Caco-2 (cell line): ENCODE measurements at regions of chr17 and their contacts with region 1.

Region 1: DNA sequence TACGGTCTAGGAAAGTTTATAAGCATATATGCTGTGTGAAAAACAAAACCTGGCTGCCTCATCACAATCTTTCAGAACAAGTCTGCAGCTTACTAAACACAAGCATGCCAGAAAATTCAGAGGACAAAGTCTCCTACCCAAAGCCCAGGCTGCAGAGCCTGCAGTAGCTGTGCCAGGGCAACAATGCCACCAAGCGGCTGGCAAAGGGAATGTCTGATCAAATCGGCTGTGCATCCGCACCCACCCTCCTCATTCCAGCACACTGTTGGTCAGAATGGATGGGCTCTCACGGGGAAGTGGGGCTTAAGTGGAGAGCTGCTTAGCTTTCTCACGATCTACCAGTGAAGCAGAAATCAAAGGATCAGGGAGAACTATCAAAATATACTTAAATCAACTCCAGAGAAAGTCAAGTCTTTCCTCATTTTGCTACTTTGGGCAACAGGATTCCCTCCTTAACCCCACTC is 73.5 kb downstream of the CYTH1 start:
- DNase-seq: peak; percentile 73 to 79
- H3K4me3 ChIP-seq: no peak overlapping the region
- H3K4me3 Mint-ChIP-seq: no peak overlapping the region
- H3K27ac Mint-ChIP-seq: no peak overlapping the region
- H3K4me1 ChIP-seq: peaks cover 3% of the 10 kb centered on the region; the same call in 1 of the 2 replicates
- H3K4me1 Mint-ChIP-seq: no peaks in the 10 kb centered on the region
- H3K27me3 ChIP-seq: no peaks in the 10 kb centered on the region
- H3K27me3 Mint-ChIP-seq: no peaks in the 10 kb centered on the region
- CTCF ChIP-seq: peak; percentile 83 to 89

Region 2: DNA sequence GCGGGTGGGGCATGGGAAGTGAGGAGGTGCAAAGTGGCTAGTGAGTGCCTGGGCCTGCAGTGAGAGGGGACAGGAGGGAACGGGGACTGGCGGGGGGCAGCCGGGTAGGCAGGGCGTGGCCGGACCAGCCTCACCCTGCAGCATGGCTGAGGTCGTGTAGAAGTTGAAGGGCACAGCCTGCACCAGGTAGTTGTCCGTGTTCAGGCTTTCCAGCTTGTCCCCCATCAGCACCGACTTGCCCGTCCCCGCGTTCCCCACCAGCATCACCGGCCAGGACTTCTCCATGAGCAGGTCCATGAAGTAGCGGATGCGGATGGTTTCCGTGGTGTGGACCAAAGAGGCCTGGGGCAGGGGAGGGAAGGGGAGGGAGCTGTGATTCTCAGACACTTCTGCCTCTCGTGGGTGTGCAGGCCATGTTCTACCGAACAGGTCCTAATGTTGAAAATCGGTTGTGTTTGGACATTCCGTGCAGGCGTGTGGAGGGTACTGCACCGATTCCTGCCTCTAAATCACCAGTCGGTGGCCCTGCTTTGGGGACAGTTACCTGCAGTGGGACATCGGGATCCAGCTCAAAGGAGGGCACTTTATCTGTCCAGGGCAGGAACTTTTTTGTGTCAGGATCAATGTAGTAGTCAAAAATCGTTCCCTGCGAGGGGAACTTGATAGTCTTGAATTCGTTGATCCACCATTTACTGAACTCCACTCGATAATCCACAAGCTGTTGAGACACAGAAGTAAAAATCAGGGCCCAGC is 222.9 kb before region 1 on chr17:
- CTCF ChIA-PET with region 1: no interaction called
- POLR2A ChIA-PET with region 1: interaction called, 10 read pairs
- intact Hi-C with region 1: no loop called
- DNase-seq: no peak
- H3K4me3 ChIP-seq: no peak overlapping the region
- H3K4me3 Mint-ChIP-seq: no peak overlapping the region
- H3K27ac Mint-ChIP-seq: no peak overlapping the region
- H3K4me1 ChIP-seq: no peaks in the 10 kb centered on the region
- H3K4me1 Mint-ChIP-seq: peaks cover 6% of the 10 kb centered on the region
- H3K27me3 ChIP-seq: no peaks in the 10 kb centered on the region
- H3K27me3 Mint-ChIP-seq: peaks cover 6% of the 10 kb centered on the region
- CTCF ChIP-seq: no peak

Region 3: DNA sequence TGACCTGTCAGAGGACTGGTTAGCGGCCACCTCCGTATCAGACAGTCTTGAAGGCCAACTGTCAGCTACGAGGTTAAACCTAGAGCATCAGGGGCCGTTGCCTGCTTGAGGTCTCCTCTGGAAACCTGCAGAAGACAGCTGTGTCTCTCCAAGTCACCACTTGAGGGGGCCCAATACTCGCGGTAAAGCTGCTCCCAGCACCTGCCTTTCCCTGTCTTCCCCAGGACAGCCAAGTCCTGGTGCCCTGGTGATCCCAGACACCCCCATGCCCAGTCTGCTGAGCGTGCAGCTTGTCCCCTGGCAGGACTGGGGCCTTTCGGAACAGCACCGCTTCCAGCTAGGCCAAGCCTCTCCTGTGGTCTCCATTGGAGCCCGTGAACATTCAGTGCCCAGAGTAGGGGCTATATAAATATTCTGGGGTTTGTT is 211.4 kb before region 1 on chr17:
- CTCF ChIA-PET with region 1: interaction called, 28 read pairs
- POLR2A ChIA-PET with region 1: no interaction called
- intact Hi-C with region 1: loop called (anchors 1 kb)
- DNase-seq: peak; percentile 87 to 88
- H3K4me3 ChIP-seq: no peak overlapping the region
- H3K4me3 Mint-ChIP-seq: no peak overlapping the region
- H3K27ac Mint-ChIP-seq: no peak overlapping the region
- H3K4me1 ChIP-seq: no peaks in the 10 kb centered on the region
- H3K4me1 Mint-ChIP-seq: no peaks in the 10 kb centered on the region
- H3K27me3 ChIP-seq: no peaks in the 10 kb centered on the region
- H3K27me3 Mint-ChIP-seq: no peaks in the 10 kb centered on the region
- CTCF ChIP-seq: peak; percentile 85 to 88

Region 4: DNA sequence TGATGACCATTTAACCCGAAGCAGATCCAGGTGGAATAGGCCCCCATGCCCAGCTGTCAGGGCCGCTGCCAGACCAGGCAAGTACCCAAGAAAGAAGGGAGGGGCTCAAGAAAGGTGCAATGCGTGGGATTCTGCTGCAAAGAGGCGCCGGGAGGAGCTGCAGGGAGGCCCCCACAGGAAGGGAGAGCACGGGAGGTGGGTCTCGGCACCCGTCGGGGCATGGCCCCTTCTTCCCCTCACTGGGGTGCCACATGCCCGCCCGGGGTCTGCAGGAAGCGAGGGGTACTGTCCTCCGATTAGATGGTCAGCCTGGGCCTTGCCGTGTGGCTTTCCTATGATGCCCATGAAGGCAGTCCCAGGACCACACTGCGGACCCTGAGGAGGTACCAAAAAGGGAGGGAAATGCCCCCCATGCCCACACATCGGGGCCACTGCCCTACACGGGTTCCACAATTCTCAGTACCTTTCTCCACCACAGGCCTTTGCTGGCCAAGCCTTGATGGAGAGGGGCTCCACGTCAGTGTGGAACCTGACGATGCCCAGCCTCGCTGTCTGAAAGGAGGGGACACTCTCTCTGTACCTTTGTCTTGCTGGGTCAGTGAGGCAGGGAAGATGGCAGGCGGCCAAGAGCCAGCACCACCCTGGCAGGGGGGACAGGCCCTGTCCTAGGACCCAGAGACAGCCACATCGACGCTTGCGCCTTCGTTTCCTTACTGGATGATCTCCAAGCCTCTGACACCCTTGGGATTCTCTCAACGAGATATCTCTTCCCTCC is 85.9 kb before region 1 on chr17:
- CTCF ChIA-PET with region 1: no interaction called
- POLR2A ChIA-PET with region 1: no interaction called
- intact Hi-C with region 1: no loop called
- DNase-seq: no peak
- H3K4me3 ChIP-seq: no peak overlapping the region
- H3K4me3 Mint-ChIP-seq: no peak overlapping the region
- H3K27ac Mint-ChIP-seq: no peak overlapping the region
- H3K4me1 ChIP-seq: no peaks in the 10 kb centered on the region
- H3K4me1 Mint-ChIP-seq: no peaks in the 10 kb centered on the region
- H3K27me3 ChIP-seq: no peaks in the 10 kb centered on the region
- H3K27me3 Mint-ChIP-seq: peaks cover 2% of the 10 kb centered on the region
- CTCF ChIP-seq: no peak

Region 5: GRCh38 chr17:78637643-78638420 is 70.7 kb before region 1 on chr17:
- CTCF ChIA-PET with region 1: no interaction called
- POLR2A ChIA-PET with region 1: no interaction called
- intact Hi-C with region 1: loop called (anchors 10 kb)
- DNase-seq: no peak
- H3K4me3 ChIP-seq: no peak overlapping the region
- H3K4me3 Mint-ChIP-seq: no peak overlapping the region
- H3K27ac Mint-ChIP-seq: no peak overlapping the region
- H3K4me1 ChIP-seq: no peaks in the 10 kb centered on the region
- H3K4me1 Mint-ChIP-seq: no peaks in the 10 kb centered on the region
- H3K27me3 ChIP-seq: no peaks in the 10 kb centered on the region
- H3K27me3 Mint-ChIP-seq: peaks cover 6% of the 10 kb centered on the region
- CTCF ChIP-seq: no peak

Region 6: GRCh38 chr17:78736526-78737079 is 28.1 kb after region 1 on chr17:
- CTCF ChIA-PET with region 1: interaction called, 14 read pairs
- POLR2A ChIA-PET with region 1: no interaction called
- intact Hi-C with region 1: no loop called
- DNase-seq: peak; percentile 90 to 93
- H3K4me3 ChIP-seq: peak overlapping the region; percentile 55
- H3K4me3 Mint-ChIP-seq: peak overlapping the region; percentile 89
- H3K27ac Mint-ChIP-seq: peak overlapping the region; percentile 89
- H3K4me1 ChIP-seq: peaks cover 26% of the 10 kb centered on the region
- H3K4me1 Mint-ChIP-seq: peaks cover 43% of the 10 kb centered on the region
- H3K27me3 ChIP-seq: no peaks in the 10 kb centered on the region
- H3K27me3 Mint-ChIP-seq: no peaks in the 10 kb centered on the region
- CTCF ChIP-seq: no peak

Region 7: GRCh38 chr17:78745407-78746088 is 37.0 kb after region 1 on chr17:
- CTCF ChIA-PET with region 1: no interaction called
- POLR2A ChIA-PET with region 1: no interaction called
- intact Hi-C with region 1: loop called (anchors 1 kb)
- DNase-seq: peak in 1 of 2 experiments; percentile 53
- H3K4me3 ChIP-seq: no peak overlapping the region
- H3K4me3 Mint-ChIP-seq: no peak overlapping the region
- H3K27ac Mint-ChIP-seq: no peak overlapping the region
- H3K4me1 ChIP-seq: no peaks in the 10 kb centered on the region
- H3K4me1 Mint-ChIP-seq: peaks cover 8% of the 10 kb centered on the region
- H3K27me3 ChIP-seq: no peaks in the 10 kb centered on the region
- H3K27me3 Mint-ChIP-seq: no peaks in the 10 kb centered on the region
- CTCF ChIP-seq: peak; percentile 50 to 69